ENCODE measurements at regions of chr19 and their contacts with region 1.

Region 1: DNA sequence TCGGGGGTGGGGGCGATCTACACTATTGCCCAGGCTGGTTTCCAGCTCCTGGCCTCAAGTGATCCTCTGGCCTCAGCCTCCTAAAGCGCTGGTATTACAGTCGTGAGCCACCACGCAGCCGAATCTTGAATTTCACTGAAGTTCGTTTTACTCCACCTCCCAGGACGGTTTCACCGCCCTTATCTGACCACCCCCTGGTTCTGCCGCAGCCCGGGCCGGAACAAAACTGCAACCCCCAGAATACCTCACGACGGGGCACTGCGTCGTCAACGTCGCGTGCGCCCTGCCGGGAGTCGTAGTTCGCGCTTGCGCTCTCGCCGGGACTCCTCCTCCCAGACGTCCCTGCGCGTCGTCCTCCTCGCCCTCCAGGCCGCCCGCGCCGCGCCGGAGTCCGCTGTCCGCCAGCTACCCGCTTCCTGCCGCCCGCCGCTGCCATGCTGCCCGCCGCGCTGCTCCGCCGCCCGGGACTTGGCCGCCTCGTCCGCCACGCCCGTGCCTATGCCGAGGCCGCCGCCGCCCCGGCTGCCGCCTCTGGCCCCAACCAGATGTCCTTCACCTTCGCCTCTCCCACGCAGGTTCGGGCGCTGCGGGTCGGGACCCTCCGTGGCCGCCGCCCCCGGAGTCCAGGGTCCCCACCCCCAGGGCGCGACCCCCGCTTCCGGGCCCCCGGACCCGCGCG is at the start of gene ATP5F1D:
- DNase-seq: peak; percentile 96
- ATAC-seq: peak; percentile 79
- H3K4me3 Mint-ChIP-seq: peak within 1 kb of the TSS; percentile 83
- H3K27ac Mint-ChIP-seq: peak within 1 kb of the TSS; percentile 86
- H3K4me1 Mint-ChIP-seq: peaks cover 38% of the 10 kb centered on the region
- H3K27me3 Mint-ChIP-seq: peaks cover 6% of the 10 kb centered on the region
- total RNA-seq, gene ATP5F1D: 161 to 180 TPM

Region 2: DNA sequence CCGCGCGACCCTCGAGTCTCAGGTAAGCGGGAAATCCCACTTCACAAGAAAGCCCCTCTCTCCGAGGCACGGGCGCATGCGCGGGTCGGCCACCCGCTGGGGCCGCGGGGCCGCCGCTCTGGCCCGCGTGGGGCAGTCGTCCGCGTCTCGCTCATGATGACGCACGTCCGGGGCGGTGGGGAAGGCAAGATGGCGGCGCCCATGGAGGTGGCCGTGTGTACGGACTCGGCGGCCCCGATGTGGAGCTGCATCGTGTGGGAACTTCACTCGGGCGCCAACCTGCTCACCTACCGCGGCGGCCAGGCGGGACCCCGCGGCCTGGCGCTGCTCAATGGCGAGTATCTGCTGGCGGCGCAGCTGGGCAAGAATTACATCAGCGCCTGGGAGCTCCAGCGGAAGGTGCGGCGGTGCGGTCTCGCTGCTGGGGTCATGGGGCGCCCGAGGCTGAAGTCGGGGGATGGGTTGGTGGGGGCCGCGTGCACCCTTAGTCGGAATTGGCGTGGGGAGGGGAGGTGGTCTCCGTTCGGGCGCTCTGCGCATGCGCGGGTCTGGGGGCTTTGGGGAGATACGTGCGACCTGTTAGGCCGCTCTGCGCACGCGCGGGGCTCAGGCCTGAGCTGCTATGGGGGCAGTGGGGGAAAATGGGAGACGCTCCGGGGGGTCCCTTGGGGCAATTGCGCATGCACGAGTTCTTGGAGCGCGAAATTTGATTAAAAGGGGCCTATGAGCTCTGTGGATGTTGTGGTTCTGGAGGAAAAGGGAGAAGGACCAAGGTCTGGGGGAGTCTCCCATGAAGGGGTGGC is 257.2 kb before region 1 on chr19 and contains the start of gene WDR18:
- CTCF ChIA-PET with region 1: interaction called, 6 read pairs
- POLR2A ChIA-PET with region 1: no interaction called
- intact Hi-C with region 1: loop called in 1 of 2 experiments (anchors 1 kb)
- DNase-seq: peak; percentile 95
- ATAC-seq: peak; percentile 92
- H3K4me3 Mint-ChIP-seq: peak within 1 kb of the TSS; percentile 91
- H3K27ac Mint-ChIP-seq: peak within 1 kb of the TSS; percentile 86
- H3K4me1 Mint-ChIP-seq: peaks cover 14% of the 10 kb centered on the region
- H3K27me3 Mint-ChIP-seq: no peaks in the 10 kb centered on the region
- total RNA-seq, gene WDR18: 71.6 to 87.8 TPM

Region 3: DNA sequence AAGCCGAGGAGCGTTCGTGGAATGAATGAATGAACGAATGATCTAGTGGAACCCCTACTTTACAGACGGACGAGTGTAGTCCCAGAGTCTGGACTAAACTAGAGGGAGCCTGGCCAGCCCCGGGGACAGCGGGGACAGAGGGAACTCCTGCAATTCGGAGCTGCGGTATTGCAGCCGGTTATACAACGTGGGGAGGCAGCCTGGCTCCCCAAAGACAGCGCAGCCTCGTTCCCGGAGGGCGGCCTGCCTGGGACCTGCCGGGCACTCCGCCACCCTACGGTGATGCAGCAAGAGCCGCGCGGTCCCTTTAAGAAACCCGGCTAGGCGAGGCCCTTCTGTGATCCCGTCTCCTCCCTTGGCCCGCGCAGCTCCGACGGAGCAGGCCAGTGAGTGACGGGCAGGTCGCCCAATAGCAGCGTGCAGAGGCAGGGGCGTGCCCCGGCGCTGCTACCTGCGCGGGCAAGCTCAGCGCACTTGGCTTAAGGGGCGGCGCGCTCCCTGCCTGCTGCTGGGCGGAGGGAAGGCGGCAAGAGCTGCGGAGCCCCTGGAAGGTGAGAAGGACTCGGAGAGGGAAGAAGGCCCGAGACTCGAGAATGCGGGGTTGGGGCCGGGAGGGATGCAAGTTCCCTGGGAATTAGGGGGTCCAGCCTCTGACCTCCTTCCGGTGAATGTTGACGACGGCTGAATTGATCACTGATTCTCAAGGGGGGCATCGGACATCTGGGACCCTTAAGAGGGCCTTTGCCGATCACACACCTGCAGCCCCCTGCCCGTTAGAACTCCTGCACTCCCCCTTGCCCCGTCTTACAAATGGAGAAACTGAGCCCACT is 201.7 kb before region 1 on chr19 and contains the start of gene ABCA7:
- CTCF ChIA-PET with region 1: interaction called, 4 read pairs
- POLR2A ChIA-PET with region 1: no interaction called
- intact Hi-C with region 1: loop called in 1 of 2 experiments (anchors 2 kb)
- DNase-seq: peak; percentile 100
- ATAC-seq: peak; percentile 96
- H3K4me3 Mint-ChIP-seq: peak within 1 kb of the TSS; percentile 86
- H3K27ac Mint-ChIP-seq: peak within 1 kb of the TSS; percentile 74
- H3K4me1 Mint-ChIP-seq: peaks cover 34% of the 10 kb centered on the region
- H3K27me3 Mint-ChIP-seq: no peaks in the 10 kb centered on the region
- total RNA-seq, gene ABCA7: 14.4 to 16.9 TPM

Region 4: GRCh38 chr19:1094975-1095701 is 146.4 kb before region 1 on chr19 and contains the start of gene POLR2E:
- CTCF ChIA-PET with region 1: interaction called, 7 read pairs
- POLR2A ChIA-PET with region 1: no interaction called
- intact Hi-C with region 1: loop called in 1 of 2 experiments (anchors 1 kb)
- DNase-seq: peak; percentile 99
- ATAC-seq: peak; percentile 89
- H3K4me3 Mint-ChIP-seq: peak within 1 kb of the TSS; percentile 88
- H3K27ac Mint-ChIP-seq: peak within 1 kb of the TSS; percentile 93
- H3K4me1 Mint-ChIP-seq: peaks cover 49% of the 10 kb centered on the region
- H3K27me3 Mint-ChIP-seq: no peaks in the 10 kb centered on the region
- total RNA-seq, gene POLR2E: 171 to 229 TPM

Region 5: GRCh38 chr19:1131738-1132551 is 109.6 kb before region 1 on chr19:
- CTCF ChIA-PET with region 1: interaction called, 3 read pairs
- POLR2A ChIA-PET with region 1: no interaction called
- intact Hi-C with region 1: loop called (anchors 1 to 2 kb)
- DNase-seq: peak; percentile 96
- ATAC-seq: peak; percentile 60
- H3K4me3 Mint-ChIP-seq: peak overlapping the region; percentile 91
- H3K27ac Mint-ChIP-seq: peak overlapping the region; percentile 96
- H3K4me1 Mint-ChIP-seq: peaks cover 46% of the 10 kb centered on the region
- H3K27me3 Mint-ChIP-seq: no peaks in the 10 kb centered on the region

Region 6: DNA sequence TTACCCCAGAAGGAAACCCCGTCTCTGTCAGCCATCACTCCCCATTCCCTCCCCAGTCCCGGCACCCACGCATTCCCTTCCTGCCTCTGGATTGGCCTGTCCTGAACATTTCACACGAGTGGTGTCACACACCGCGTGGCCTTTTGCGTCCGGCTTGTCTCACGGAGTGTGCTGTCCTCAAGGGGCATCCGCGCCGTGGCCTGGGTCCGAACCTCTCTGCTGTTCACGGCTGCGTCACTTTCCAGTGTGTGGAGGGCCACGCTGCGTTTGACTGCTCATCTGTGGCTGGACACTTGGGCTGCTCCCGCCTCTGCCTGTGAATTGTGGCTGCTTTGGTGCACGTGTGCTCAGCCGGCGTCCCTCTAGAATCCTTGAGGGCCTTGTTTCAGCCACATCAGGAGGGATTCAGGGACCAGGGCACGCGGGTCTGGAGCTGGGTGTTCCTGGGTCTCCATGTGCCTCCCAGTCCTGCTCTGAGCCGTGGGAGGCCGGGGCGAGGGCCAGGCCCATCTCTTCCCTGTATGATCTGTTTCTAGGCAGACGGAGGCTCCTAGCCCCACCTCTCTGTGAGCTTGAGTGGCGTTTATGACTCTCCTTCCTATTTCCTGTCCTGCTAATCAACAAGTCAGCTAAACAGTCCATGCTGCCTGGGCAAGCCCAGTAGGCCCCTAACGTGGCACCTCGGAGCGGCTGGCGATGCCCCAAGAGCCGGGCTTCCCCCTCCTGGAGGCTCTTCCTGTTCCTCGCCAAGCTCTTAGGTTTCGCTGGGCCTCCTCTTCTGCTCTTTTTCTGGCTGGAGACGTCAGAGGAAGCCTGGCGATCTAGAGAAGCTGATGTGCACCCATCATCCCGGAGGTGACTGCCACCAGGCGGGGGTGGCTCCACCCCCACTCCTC is 27.9 kb before region 1 on chr19:
- CTCF ChIA-PET with region 1: interaction called, 3 read pairs
- POLR2A ChIA-PET with region 1: no interaction called
- intact Hi-C with region 1: loop called in 1 of 2 experiments (anchors 2 kb)
- DNase-seq: peak; percentile 81
- ATAC-seq: peak; percentile 95
- H3K4me3 Mint-ChIP-seq: peak overlapping the region; percentile 72
- H3K27ac Mint-ChIP-seq: peak overlapping the region; percentile 99
- H3K4me1 Mint-ChIP-seq: peaks cover 31% of the 10 kb centered on the region
- H3K27me3 Mint-ChIP-seq: no peaks in the 10 kb centered on the region

Region 7: DNA sequence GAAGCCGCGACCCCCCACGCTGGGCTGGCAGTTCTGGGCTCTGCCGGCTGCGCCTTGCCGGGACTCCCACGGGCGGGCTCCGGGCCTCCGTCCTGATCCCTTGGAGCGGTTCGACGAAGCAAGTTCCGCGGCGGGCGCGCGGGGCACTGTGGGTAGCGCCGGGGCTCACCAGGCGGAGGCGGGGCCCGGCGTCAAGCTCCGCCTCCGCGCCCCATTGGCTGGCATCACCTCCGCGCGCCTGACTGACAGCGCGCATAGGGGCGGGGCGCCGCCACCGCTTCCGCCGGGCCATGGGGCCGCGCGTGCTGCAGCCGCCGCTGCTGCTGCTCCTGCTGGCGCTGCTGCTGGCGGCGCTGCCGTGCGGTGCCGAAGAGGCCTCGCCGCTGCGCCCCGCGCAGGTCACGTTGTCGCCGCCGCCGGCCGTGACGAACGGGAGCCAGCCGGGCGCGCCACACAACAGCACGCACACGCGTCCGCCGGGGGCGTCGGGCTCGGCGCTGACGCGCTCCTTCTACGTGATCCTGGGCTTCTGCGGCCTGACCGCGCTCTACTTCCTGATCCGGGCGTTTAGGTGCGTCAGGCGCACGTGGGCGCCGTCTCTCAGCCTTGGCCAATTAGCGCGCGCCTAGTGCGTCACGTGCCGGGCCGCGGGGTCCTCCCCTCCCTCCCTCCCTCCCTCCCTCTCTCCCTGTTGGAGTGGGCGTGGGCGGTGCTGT is 33.9 kb after region 1 on chr19 and contains the start of gene FAM174C:
- CTCF ChIA-PET with region 1: interaction called, 21 read pairs
- POLR2A ChIA-PET with region 1: interaction called, 5 read pairs
- intact Hi-C with region 1: no loop called
- DNase-seq: peak; percentile 99
- ATAC-seq: peak; percentile 82
- H3K4me3 Mint-ChIP-seq: peak within 1 kb of the TSS; percentile 83
- H3K27ac Mint-ChIP-seq: peak within 1 kb of the TSS; percentile 95
- H3K4me1 Mint-ChIP-seq: peaks cover 54% of the 10 kb centered on the region
- H3K27me3 Mint-ChIP-seq: no peaks in the 10 kb centered on the region
- total RNA-seq, gene FAM174C: 75.3 to 88.3 TPM